Activated CD8-positive, alpha-beta T cell treated with anti-CD3 and anti-CD28 coated beads, Interleukin-2, amount 10 ng/mL, durations not matched to agents 7 days and 5 days (primary cell): ENCODE measurements at regions of chr12 and their contacts with region 1.

Region 1: GRCh38 chr12:575948-576612 is 87.2 kb downstream of the NINJ2 start:
- DNase-seq: peak; percentile 88
- ATAC-seq: peak; percentile 98
- H3K4me3 Mint-ChIP-seq: no peak overlapping the region
- H3K27ac Mint-ChIP-seq: peak overlapping the region; percentile 85
- H3K4me1 Mint-ChIP-seq: peaks cover 40% of the 10 kb centered on the region
- H3K27me3 Mint-ChIP-seq: peaks cover 5% of the 10 kb centered on the region

Region 2: GRCh38 chr12:452667-453210 is 123.3 kb before region 1 on chr12:
- CTCF ChIA-PET with region 1: no interaction called
- POLR2A ChIA-PET with region 1: no interaction called
- DNase-seq: peak; percentile 68
- ATAC-seq: no peak
- H3K4me3 Mint-ChIP-seq: no peak overlapping the region
- H3K27ac Mint-ChIP-seq: no peak overlapping the region
- H3K4me1 Mint-ChIP-seq: peaks cover 2% of the 10 kb centered on the region
- H3K27me3 Mint-ChIP-seq: peaks cover 43% of the 10 kb centered on the region

Region 3: DNA sequence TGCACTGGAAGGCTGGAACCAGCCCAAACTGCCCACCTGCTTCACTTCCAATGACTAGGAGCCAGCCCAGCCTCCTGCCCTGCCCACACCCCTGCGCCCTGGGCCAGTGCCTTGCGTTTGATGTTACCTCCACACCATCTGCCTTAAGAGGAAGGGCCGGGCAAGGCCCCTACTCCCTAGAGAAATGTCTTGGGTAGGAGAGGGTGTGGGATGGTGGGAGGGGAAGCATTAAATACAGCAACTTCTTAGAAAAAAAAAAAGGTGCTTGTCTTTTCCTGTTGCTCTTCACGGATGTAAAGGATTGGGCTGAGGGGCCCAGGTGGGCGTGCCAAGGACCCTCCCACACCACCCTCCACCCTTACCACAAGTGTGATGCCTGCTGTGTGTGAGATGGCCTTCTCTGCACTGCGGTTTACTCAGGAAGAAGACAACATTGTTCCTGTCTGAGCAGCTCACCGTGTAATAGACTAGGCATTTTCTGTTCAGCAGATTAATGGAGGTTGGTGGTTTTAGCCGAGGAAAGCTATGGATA is 12.8 kb before region 1 on chr12:
- CTCF ChIA-PET with region 1: interaction called, 36 read pairs
- POLR2A ChIA-PET with region 1: interaction called, 3 read pairs
- DNase-seq: peak; percentile 83
- ATAC-seq: peak; percentile 85
- H3K4me3 Mint-ChIP-seq: peak overlapping the region; percentile 68
- H3K27ac Mint-ChIP-seq: peak overlapping the region; percentile 90
- H3K4me1 Mint-ChIP-seq: peaks cover 79% of the 10 kb centered on the region
- H3K27me3 Mint-ChIP-seq: no peaks in the 10 kb centered on the region

Region 4: DNA sequence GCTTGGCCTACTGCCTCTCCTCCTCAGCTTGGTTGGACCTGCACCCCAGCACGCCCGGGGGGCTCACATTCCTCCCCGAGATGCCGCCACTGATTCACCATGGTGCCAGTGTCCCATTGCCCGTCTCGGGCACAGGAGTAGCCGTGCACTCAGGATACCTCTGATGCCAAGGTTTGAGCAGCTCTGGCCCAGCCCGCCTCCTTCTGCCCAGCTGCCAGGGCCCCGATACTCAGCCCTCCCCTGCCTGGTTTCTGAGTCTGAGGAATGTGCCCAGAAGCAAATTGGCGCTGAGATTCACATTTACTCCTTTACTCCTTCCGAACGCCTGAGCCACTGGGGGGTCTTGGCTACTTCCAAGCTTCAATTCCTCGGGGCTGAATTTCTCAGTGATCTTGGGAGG is 23.7 kb after region 1 on chr12:
- CTCF ChIA-PET with region 1: interaction called, 11 read pairs
- POLR2A ChIA-PET with region 1: no interaction called
- DNase-seq: no peak
- ATAC-seq: no peak
- H3K4me3 Mint-ChIP-seq: no peak overlapping the region
- H3K27ac Mint-ChIP-seq: no peak overlapping the region
- H3K4me1 Mint-ChIP-seq: no peaks in the 10 kb centered on the region
- H3K27me3 Mint-ChIP-seq: peaks cover 8% of the 10 kb centered on the region

Region 5: DNA sequence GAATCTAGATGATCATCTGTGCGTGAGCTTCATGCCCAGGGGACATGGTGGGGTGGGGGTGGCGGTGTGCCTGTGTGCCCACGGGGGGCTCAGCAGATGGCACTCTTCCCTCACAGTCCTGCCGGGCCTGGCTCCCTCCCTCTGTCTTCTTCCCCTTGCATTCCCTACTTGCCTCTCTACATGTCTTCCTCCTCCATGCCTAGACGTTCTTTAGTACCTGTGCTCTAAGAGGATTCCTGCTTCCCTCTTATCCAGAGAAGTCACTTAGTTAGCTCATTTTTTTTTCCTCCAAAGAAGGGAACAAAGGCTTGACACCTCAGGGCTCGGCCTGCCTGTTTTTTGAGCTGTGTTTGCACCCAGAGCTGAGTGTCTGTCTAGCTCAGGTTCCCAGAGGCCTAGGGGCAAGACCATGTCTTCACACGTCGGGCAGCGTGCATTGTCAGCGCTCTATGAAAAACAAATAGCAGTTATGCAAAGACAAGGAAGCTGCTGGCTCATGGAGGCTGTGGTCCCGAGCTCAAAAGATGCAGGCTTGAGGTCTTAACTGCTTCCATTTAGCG is 38.4 kb after region 1 on chr12:
- CTCF ChIA-PET with region 1: interaction called, 18 read pairs
- POLR2A ChIA-PET with region 1: interaction called, 4 read pairs
- DNase-seq: peak; percentile 46
- ATAC-seq: no peak
- H3K4me3 Mint-ChIP-seq: no peak overlapping the region
- H3K27ac Mint-ChIP-seq: no peak overlapping the region
- H3K4me1 Mint-ChIP-seq: peaks cover 72% of the 10 kb centered on the region
- H3K27me3 Mint-ChIP-seq: no peaks in the 10 kb centered on the region

Region 6: GRCh38 chr12:674272-674781 is 98.2 kb after region 1 on chr12:
- CTCF ChIA-PET with region 1: interaction called, 10 read pairs
- POLR2A ChIA-PET with region 1: interaction called, 3 read pairs
- DNase-seq: peak; percentile 82
- ATAC-seq: peak; percentile 92
- H3K4me3 Mint-ChIP-seq: peak overlapping the region; percentile 61
- H3K27ac Mint-ChIP-seq: peak overlapping the region; percentile 94
- H3K4me1 Mint-ChIP-seq: peaks cover 70% of the 10 kb centered on the region
- H3K27me3 Mint-ChIP-seq: no peaks in the 10 kb centered on the region

Region 7: DNA sequence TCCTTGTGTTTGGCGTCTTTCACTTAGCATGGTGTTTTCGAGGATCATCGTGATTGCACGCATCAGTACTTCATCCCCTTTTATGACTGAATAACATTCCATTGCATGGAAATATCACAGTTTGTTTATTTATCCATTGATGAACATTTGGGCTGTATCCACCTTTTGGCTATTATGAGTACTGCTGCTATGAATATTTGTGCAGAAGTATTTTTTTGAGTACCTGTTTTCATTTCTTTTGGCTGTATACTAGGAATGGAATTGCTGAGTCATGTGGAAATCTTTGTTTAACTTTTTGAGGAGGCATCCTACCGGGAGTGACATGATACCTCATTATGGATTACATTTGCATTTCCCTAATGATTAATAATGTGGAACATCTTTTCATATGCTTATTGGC is 242.7 kb after region 1 on chr12:
- CTCF ChIA-PET with region 1: interaction called, 69 read pairs
- POLR2A ChIA-PET with region 1: no interaction called
- DNase-seq: no peak
- ATAC-seq: no peak
- H3K4me3 Mint-ChIP-seq: no peak overlapping the region
- H3K27ac Mint-ChIP-seq: no peak overlapping the region
- H3K4me1 Mint-ChIP-seq: peaks cover 47% of the 10 kb centered on the region
- H3K27me3 Mint-ChIP-seq: no peaks in the 10 kb centered on the region